ENCODE measurements at regions of chr17 and their contacts with region 1.

Region 1: GRCh38 chr17:29931231-29931932 is 1.4 kb upstream of the SSH2 start:
- DNase-seq: peak; percentile 83
- H3K4me3 Mint-ChIP-seq: no peak overlapping the region
- H3K27ac Mint-ChIP-seq: no peak overlapping the region
- H3K4me1 Mint-ChIP-seq: peaks cover 25% of the 10 kb centered on the region
- H3K27me3 Mint-ChIP-seq: no peaks in the 10 kb centered on the region
- CTCF ChIP-seq: peak; percentile 72

Region 2: DNA sequence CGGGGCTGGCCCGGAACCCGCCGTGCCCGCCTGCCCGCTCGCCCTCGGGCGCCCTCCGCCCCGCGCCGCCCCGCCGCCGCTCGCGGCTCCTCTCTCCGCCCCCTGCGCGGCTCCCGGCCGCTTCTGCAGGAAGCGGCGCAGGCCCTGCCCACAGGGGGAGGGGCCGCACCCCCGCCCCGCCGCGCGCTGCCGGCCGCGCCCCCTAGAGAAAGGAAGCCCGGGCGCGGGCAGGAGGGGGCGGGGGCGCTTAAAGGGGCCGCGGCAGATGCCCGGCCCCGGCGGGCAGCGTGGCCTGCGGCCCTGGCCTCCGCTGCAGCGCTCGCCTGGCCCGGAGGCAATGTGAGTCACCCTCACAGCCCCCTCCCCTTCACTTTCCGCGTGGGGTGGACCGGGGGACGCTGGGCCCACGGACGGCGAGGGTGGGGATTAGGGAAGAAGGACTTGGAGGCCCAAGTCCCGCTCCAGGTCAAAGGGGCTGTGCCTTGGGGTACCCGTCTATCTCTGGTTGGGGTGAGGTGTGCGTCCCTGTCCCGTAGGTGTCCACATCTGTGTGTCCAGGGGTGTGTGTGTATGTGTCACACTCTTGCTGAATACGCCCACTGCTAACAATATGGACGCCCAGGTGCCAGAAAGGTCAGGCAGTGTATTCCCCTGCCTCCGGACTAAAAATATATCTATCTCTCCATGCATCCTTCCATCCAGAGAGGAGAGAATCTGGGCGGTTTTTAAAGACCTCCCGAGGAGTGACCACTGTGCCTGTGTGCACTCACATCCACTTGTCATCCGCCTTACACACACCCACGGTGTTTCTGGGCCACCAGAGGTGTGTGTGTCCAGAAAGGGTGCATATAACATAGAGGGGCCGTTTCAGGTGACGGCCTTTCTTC is 341.6 kb before region 1 on chr17 and contains the start of gene GIT1:
- CTCF ChIA-PET with region 1: interaction called, 3 read pairs
- POLR2A ChIA-PET with region 1: interaction called, 11 read pairs
- intact Hi-C with region 1: loop called (anchors 2 kb)
- DNase-seq: peak; percentile 83
- H3K4me3 Mint-ChIP-seq: peak within 1 kb of the TSS; percentile 83
- H3K27ac Mint-ChIP-seq: peak within 1 kb of the TSS; percentile 82
- H3K4me1 Mint-ChIP-seq: peaks cover 23% of the 10 kb centered on the region
- H3K27me3 Mint-ChIP-seq: no peaks in the 10 kb centered on the region
- CTCF ChIP-seq: no peak
- total RNA-seq, gene GIT1: 49.0 and 52.6 TPM in 2 replicates

Region 3: GRCh38 chr17:29807520-29808351 is 123.6 kb before region 1 on chr17:
- CTCF ChIA-PET with region 1: interaction called, 323 read pairs
- POLR2A ChIA-PET with region 1: interaction called, 45 read pairs
- intact Hi-C with region 1: loop called (anchors 1 kb)
- DNase-seq: peak; percentile 74
- H3K4me3 Mint-ChIP-seq: no peak overlapping the region
- H3K27ac Mint-ChIP-seq: no peak overlapping the region
- H3K4me1 Mint-ChIP-seq: no peaks in the 10 kb centered on the region
- H3K27me3 Mint-ChIP-seq: no peaks in the 10 kb centered on the region
- CTCF ChIP-seq: peak; percentile 74

Region 4: DNA sequence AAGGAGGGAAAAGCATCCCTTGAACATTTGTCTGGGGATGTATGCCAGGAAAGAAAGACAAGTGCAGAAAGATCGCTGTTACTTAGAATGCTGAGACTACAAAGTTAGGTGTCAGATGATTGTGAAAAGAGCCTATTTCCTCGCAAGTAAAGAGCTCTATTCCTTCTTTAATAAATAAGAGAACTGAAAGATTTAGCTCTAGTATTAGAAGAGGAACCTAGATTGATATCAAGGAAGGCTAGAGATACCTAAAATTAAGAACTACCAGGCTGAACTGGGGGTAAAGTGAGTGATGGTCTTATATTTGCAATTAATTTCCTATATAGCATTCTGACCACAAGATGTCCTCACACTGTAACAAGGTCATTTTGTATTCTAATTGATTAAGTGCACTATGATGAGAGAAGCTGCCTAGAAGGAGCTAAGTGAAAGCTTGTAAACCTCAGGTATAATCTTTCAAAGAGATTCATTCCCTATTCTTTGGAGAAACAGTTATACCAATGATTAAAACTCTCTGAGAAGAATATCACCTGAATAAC is 63.7 kb before region 1 on chr17:
- CTCF ChIA-PET with region 1: interaction called, 52 read pairs
- POLR2A ChIA-PET with region 1: interaction called, 14 read pairs
- intact Hi-C with region 1: loop called (anchors 1 kb)
- DNase-seq: no peak
- H3K4me3 Mint-ChIP-seq: no peak overlapping the region
- H3K27ac Mint-ChIP-seq: no peak overlapping the region
- H3K4me1 Mint-ChIP-seq: no peaks in the 10 kb centered on the region
- H3K27me3 Mint-ChIP-seq: no peaks in the 10 kb centered on the region
- CTCF ChIP-seq: peak; percentile 25

Region 5: GRCh38 chr17:29918922-29919856 is 12.2 kb before region 1 on chr17:
- CTCF ChIA-PET with region 1: interaction called, 20 read pairs
- POLR2A ChIA-PET with region 1: interaction called, 38 read pairs
- intact Hi-C with region 1: no loop called
- DNase-seq: peak; percentile 5
- H3K4me3 Mint-ChIP-seq: peak overlapping the region; percentile 2
- H3K27ac Mint-ChIP-seq: peak overlapping the region; percentile 33
- H3K4me1 Mint-ChIP-seq: peaks cover 16% of the 10 kb centered on the region
- H3K27me3 Mint-ChIP-seq: no peaks in the 10 kb centered on the region
- CTCF ChIP-seq: no peak

Region 6: GRCh38 chr17:30021708-30022317 is 90.4 kb after region 1 on chr17:
- CTCF ChIA-PET with region 1: interaction called, 42 read pairs
- POLR2A ChIA-PET with region 1: interaction called, 7 read pairs
- intact Hi-C with region 1: loop called (anchors 1 kb)
- DNase-seq: peak; percentile 66
- H3K4me3 Mint-ChIP-seq: no peak overlapping the region
- H3K27ac Mint-ChIP-seq: no peak overlapping the region
- H3K4me1 Mint-ChIP-seq: no peaks in the 10 kb centered on the region
- H3K27me3 Mint-ChIP-seq: peaks cover 12% of the 10 kb centered on the region
- CTCF ChIP-seq: peak; percentile 73